Breast epithelium (tissue), 4 donors: ENCODE measurements at regions of chr4 and their contacts with region 1.

Region 1: DNA sequence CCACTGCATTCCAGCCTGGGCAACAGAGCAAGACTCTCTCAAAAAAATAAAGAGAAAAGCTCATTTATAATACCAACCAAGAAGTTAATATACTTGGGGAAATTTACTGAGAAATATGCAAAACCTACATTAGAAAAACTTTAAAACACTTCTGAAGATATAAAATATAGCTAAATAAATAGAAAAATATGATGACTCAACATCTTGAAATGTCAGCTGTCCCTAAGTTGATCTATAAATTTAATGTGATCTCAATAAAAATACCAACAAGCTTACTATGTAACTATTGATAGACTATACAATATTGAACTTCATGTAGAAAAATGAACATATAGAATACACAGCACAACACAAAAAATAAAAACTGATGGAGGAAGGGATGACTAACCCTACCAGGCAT is 87.5 kb upstream of the INTU start:
- DNase-seq: no peak
- H3K4me3 ChIP-seq: no peak overlapping the region
- H3K27ac ChIP-seq: no peak overlapping the region
- H3K4me1 ChIP-seq: no peaks in the 10 kb centered on the region
- H3K27me3 ChIP-seq: no peaks in the 10 kb centered on the region
- CTCF ChIP-seq: no peak
- POLR2A ChIP-seq: no peak

Region 2: GRCh38 chr4:127558489-127559407 is 13.5 kb after region 1 on chr4:
- intact Hi-C with region 1: loop called (anchors 2 kb)
- DNase-seq: no peak
- H3K4me3 ChIP-seq: no peak overlapping the region
- H3K27ac ChIP-seq: no peak overlapping the region
- H3K4me1 ChIP-seq: no peaks in the 10 kb centered on the region
- H3K27me3 ChIP-seq: no peaks in the 10 kb centered on the region
- CTCF ChIP-seq: no peak
- POLR2A ChIP-seq: no peak